ENCODE measurements at regions of chr16 and their contacts with region 1.

Region 1: GRCh38 chr16:31142109-31143010 is 6.8 kb upstream of the PRSS8 start:
- DNase-seq: peak; percentile 99
- H3K4me3 ChIP-seq: peak overlapping the region; percentile 45
- H3K27ac ChIP-seq: peak overlapping the region; percentile 75
- H3K4me1 ChIP-seq: peaks cover 11% of the 10 kb centered on the region
- H3K27me3 ChIP-seq: no peaks in the 10 kb centered on the region
- CTCF ChIP-seq: peak; percentile 97

Region 2: GRCh38 chr16:30957456-30958174 is 184.7 kb before region 1 on chr16 and contains the start of gene SETD1A:
- CTCF ChIA-PET with region 1: interaction called, 3 read pairs
- POLR2A ChIA-PET with region 1: no interaction called
- intact Hi-C with region 1: loop called (anchors 10 kb)
- DNase-seq: peak; percentile 98
- H3K4me3 ChIP-seq: peak within 1 kb of the TSS; percentile 80
- H3K27ac ChIP-seq: peak within 1 kb of the TSS; percentile 99
- H3K4me1 ChIP-seq: peaks cover 10% of the 10 kb centered on the region
- H3K27me3 ChIP-seq: no peaks in the 10 kb centered on the region
- CTCF ChIP-seq: no peak
- total RNA-seq, gene SETD1A: 31.4 and 37.1 TPM in 2 replicates

Region 3: DNA sequence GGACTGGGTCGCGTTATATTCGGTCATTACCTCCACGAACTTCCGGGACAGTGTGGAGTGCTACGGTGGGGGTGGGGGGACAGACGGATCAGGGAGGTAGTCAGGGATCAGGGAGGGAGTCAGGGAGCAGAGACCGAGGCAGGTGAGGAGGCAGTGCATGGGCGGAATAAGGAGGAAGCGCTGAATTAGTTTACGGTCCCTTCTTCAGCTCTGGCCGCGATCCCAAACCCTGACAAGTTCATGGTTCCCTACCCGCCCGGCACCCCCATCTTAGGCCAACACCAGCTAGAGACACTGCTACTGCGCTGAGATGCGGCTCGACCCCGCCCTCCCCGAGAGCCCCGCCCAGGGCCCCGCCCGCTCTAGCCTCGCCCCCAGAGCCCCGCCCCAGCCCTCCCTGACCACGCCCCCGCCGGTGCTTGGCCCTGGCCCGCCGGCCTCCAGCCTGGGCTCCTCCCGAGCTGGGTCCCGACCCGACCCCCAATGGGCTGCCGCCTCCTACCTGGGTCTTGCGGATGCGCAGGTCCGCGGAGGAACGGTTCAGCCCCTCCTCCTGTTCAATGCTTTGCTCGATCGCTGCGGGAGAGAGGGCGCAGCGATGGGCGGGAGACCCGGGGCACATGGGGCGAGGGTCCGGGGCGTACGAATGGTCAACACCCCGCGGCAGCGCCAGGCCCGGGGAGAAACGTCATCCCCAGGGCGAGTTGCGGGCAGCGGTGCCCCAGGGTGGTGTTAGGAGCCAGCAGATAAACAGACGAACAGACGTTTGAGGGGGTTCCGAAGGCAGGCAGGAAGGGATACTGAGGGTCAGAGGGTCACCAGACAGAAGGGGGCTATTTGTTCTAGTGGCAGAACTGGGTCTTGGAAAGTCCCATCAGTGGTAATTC is 145.1 kb before region 1 on chr16:
- CTCF ChIA-PET with region 1: no interaction called
- POLR2A ChIA-PET with region 1: no interaction called
- intact Hi-C with region 1: loop called (anchors 5 kb)
- DNase-seq: peak; percentile 72
- H3K4me3 ChIP-seq: peak overlapping the region; percentile 50
- H3K27ac ChIP-seq: no peak overlapping the region
- H3K4me1 ChIP-seq: no peaks in the 10 kb centered on the region
- H3K27me3 ChIP-seq: no peaks in the 10 kb centered on the region
- CTCF ChIP-seq: no peak

Region 4: DNA sequence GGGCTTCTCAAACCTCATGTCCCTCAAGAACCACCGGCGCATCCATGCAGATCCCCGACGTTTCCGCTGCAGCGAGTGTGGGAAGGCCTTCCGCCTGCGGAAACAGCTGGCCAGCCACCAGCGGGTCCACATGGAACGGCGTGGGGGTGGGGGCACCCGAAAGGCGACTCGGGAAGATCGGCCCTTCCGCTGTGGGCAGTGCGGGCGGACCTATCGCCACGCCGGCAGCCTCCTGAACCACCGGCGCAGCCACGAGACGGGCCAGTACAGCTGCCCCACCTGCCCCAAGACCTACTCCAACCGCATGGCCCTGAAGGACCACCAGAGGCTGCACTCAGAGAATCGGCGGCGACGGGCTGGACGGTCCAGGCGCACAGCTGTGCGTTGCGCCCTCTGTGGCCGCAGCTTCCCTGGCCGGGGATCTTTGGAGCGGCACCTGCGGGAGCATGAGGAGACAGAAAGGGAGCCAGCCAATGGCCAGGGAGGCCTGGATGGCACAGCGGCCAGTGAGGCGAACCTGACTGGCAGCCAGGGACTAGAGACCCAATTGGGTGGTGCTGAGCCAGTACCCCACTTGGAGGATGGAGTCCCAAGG is 62.2 kb before region 1 on chr16:
- CTCF ChIA-PET with region 1: no interaction called
- POLR2A ChIA-PET with region 1: no interaction called
- intact Hi-C with region 1: no loop called
- DNase-seq: no peak
- H3K4me3 ChIP-seq: no peak overlapping the region
- H3K27ac ChIP-seq: no peak overlapping the region
- H3K4me1 ChIP-seq: peaks cover 5% of the 10 kb centered on the region
- H3K27me3 ChIP-seq: no peaks in the 10 kb centered on the region
- CTCF ChIP-seq: no peak

Region 5: DNA sequence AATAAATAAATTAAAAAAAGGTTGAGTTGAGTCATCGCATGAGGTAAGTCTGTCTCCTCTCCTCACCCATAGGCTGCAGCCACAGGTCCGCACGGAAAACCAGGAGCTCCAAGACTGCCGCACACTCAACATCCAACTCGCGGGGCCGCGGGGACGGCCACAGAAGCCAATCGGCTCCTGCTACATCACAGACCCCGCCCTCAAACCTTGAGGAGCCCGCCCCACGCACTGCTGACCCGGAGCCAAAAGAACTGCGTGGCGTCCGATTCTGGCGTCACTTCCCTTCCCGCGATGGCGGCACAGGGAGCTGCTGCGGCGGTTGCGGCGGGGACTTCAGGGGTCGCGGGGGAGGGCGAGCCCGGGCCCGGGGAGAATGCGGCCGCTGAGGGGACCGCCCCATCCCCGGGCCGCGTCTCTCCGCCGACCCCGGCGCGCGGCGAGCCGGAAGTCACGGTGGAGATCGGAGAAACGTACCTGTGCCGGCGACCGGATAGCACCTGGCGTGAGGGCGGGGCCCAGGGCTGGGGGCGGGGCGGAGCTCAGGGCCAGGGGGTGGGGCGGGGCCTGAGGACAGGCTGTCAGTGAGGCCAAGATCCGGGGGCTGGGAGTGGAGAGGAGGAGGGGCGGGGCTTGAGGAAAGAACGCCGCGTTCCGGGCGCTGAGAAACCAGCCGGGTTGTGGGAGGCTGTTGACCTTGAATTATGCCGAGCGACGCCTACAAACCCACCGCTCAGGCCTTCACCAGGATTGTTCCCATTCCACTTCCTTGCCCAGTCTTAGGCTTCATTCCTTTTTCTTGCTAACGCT is 24.8 kb before region 1 on chr16 and contains the start of gene KAT8:
- CTCF ChIA-PET with region 1: interaction called, 10 read pairs
- POLR2A ChIA-PET with region 1: interaction called, 7 read pairs
- intact Hi-C with region 1: loop called (anchors 2 kb)
- DNase-seq: peak; percentile 100
- H3K4me3 ChIP-seq: peak within 1 kb of the TSS; percentile 74
- H3K27ac ChIP-seq: peak within 1 kb of the TSS; percentile 79
- H3K4me1 ChIP-seq: peaks cover 6% of the 10 kb centered on the region
- H3K27me3 ChIP-seq: no peaks in the 10 kb centered on the region
- CTCF ChIP-seq: no peak
- total RNA-seq, gene KAT8: 65.4 and 70.6 TPM in 2 replicates